Mucosa of descending colon (tissue), 3 donors: ENCODE measurements at regions of chr3 and their contacts with region 1.

Region 1: DNA sequence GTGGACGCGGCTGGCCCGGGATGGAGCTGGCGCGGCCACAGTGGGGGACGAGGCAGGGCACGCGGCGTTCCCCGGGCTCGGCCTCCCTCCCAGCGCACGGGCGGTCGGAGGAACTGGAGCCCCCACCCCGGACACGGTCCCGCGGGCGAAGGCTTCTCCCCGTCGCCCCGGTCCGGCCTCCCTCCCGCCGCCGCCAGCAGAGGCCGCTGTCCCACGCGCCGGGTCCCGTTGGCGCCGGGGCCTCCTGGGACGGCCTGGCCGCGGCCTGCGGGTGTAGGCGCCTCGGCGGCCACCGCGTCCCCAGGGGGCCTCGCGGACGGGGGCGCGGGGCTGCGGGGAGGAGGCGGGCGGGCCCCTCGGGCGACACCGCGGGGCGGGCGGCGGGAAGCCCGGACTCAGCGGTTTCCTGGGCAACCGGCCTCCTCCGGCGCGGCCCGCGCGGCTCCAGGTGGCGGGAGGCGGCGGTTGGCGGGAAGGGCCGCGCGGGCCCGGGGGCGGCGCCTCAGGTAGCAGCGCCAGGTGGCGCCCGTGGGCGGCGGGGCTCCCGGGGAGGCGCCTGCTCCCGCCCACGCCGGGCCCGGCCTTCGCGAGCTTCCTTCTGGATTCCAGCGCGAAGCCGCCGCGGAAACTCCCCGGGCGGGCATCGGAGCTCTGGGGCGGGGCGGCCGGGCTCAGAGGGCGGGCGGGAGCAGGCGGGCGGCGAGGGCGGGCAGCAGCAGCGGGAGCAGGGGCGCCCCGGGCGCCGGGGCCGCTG is 26.7 kb downstream of the MELTF start:
- DNase-seq: peak; percentile 91 to 94 (median 92)
- ATAC-seq: peak; percentile 92
- H3K4me3 ChIP-seq: peak overlapping the region; percentile 17
- H3K4me1 ChIP-seq: peaks cover 7% of the 10 kb centered on the region
- CTCF ChIP-seq: peak; percentile 82

Region 2: GRCh38 chr3:196803891-196804468 is 198.9 kb before region 1 on chr3:
- intact Hi-C with region 1: no loop called
- DNase-seq: no peak
- ATAC-seq: no peak
- H3K4me3 ChIP-seq: no peak overlapping the region
- H3K4me1 ChIP-seq: no peaks in the 10 kb centered on the region
- CTCF ChIP-seq: no peak

Region 3: GRCh38 chr3:197186887-197187588 is 184.2 kb after region 1 on chr3:
- intact Hi-C with region 1: loop called in 1 of 2 experiments (anchors 10 kb)
- DNase-seq: peak in 1 of 3 donors; percentile 31
- ATAC-seq: peak; percentile 84
- H3K4me3 ChIP-seq: no peak overlapping the region
- H3K4me1 ChIP-seq: no peaks in the 10 kb centered on the region
- CTCF ChIP-seq: peak; percentile 58